ENCODE measurements at regions of chr5 and their contacts with region 1.

Region 1: DNA sequence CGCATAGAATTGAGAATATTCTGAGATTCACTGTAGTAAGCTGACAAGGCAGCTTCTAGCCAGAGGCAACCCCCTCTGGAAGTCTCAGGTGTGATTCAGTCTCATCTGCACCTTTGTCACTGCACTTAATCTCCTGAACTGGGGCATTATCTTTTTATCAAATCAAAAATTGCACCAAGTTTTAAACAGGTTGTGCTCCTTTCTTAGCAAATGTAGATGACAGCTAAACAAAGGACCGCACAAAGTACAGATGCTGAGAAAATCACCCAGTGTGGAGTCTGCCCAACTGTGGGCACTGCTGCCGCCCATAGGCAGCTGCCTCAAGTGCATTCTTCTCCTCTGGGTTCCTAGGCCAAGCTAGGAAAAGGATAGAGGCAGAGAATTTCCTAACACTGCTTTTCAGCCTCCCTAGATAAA is 51.1 kb downstream of the STARD4 start:
- DNase-seq: peak in 8 of 10 donors; percentile 10 to 71 (median 46)
- H3K4me3 ChIP-seq: no peak overlapping the region
- H3K27ac ChIP-seq: peak overlapping the region in 2 of 59 donors; percentile 6 to 21
- H3K27me3 ChIP-seq: no peaks in the 10 kb centered on the region
- CTCF ChIP-seq: peak in 52 of 56 donors; percentile 8 to 70 (median 48)

Region 2: GRCh38 chr5:111158105-111158744 is 303.0 kb before region 1 on chr5:
- intact Hi-C with region 1: loop called in 1 of 2 experiments (anchors 5 kb)
- DNase-seq: peak in 7 of 10 donors; percentile 49 to 90 (median 72)
- H3K4me3 ChIP-seq: peak overlapping the region in 4 of 59 donors; percentile 6 to 31 (median 10)
- H3K27ac ChIP-seq: no peak overlapping the region
- H3K27me3 ChIP-seq: no peaks in the 10 kb centered on the region
- CTCF ChIP-seq: peak; percentile 95 to 100 (median 99)